Activated CD4-positive, alpha-beta T cell treated with anti-CD3 and anti-CD28 coated beads, Interleukin-2, amount 10 ng/mL, durations not matched to agents 24 days and 14 days (primary cell): ENCODE measurements at regions of chr19 and their contacts with region 1.

Region 1: DNA sequence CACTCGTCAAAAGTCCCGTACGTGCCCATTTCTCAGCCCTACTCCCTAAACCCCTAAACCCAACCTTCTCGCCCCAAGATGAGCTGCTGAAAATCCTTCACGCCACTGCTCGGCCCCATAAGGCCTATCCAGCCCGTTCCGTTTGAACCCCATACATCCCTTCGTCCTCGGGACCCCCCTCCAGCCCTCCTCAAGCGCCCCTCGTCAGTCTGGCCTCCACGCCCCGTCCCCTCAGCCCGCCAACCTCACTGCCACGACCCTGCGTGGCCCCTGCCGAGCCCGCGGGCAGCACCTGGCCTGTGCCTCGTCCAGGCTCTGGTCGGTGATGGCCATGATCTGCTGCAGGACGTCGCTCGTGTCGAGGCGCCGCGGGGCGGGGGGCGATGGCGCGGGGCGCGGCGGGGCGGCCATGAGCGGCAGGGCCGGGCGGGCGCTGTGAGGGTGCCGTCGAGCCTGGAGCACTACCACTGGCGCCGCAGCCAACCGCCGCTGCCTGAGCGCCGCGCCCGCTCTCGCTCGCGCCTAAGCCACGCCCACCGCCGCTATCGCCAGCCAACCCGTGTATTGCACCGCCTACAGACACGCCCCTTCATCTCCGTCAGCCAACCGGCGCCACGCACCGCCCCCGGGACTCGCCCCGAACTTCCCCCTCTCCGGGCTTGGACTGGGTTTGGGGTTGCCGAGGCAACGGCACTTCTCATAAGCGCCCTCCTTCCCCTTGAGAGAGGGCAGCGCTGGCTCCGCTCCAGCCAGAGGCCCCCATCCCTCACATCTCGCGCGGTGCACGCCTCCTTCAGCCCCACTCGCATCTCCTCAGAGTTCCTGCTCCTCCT is at the start of gene PBX4:
- DNase-seq: peak; percentile 100
- H3K4me3 Mint-ChIP-seq: peak within 1 kb of the TSS; percentile 86
- H3K27ac Mint-ChIP-seq: peak within 1 kb of the TSS; percentile 88
- H3K4me1 Mint-ChIP-seq: peaks cover 40% of the 10 kb centered on the region
- H3K27me3 Mint-ChIP-seq: no peaks in the 10 kb centered on the region
- total RNA-seq, gene PBX4: 19.2 and 20.5 TPM in 2 replicates

Region 2: DNA sequence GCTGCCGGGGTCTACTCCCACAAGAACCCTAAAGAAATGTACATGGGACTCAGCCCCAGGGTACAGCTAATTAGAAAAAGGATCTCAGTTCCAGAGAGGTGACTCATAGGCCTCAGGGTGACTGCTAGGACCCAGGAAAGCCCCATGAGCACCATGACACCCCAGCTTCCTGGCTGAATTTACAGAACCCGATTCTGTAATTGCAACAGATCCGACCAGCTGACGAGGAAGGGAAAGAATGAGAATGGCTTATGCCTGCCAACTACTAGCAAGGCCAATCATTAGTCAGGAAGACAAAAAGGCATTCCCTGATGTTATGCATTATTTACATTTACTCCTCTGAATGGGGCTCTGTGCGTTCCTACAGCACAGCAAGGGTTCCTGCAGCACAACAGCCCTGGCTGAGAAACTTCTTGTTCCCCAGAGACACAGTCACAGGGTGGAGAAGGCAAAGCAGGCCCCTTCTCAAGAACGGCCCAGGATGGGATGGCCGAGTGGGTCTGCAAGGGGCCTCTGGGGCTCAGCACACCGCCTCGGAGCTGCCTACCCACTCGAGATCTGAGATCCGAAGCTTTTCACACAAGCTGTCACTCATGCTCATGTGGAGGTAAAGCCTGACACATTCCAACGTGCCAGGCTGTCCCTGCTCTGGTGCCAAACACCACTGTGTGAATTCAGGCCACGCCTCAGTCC is 27.2 kb before region 1 on chr19:
- intact Hi-C with region 1: loop called (anchors 1 kb)
- DNase-seq: peak; percentile 92
- H3K4me3 Mint-ChIP-seq: peak overlapping the region; percentile 75
- H3K27ac Mint-ChIP-seq: peak overlapping the region; percentile 94
- H3K4me1 Mint-ChIP-seq: peaks cover 60% of the 10 kb centered on the region
- H3K27me3 Mint-ChIP-seq: no peaks in the 10 kb centered on the region

Region 3: GRCh38 chr19:19597809-19598306 is 20.6 kb before region 1 on chr19:
- intact Hi-C with region 1: loop called (anchors 1 kb)
- DNase-seq: peak; percentile 91
- H3K4me3 Mint-ChIP-seq: peak overlapping the region; percentile 82
- H3K27ac Mint-ChIP-seq: peak overlapping the region; percentile 96
- H3K4me1 Mint-ChIP-seq: peaks cover 61% of the 10 kb centered on the region
- H3K27me3 Mint-ChIP-seq: no peaks in the 10 kb centered on the region